ENCODE measurements at regions of chr17 and their contacts with region 1.

Region 1: DNA sequence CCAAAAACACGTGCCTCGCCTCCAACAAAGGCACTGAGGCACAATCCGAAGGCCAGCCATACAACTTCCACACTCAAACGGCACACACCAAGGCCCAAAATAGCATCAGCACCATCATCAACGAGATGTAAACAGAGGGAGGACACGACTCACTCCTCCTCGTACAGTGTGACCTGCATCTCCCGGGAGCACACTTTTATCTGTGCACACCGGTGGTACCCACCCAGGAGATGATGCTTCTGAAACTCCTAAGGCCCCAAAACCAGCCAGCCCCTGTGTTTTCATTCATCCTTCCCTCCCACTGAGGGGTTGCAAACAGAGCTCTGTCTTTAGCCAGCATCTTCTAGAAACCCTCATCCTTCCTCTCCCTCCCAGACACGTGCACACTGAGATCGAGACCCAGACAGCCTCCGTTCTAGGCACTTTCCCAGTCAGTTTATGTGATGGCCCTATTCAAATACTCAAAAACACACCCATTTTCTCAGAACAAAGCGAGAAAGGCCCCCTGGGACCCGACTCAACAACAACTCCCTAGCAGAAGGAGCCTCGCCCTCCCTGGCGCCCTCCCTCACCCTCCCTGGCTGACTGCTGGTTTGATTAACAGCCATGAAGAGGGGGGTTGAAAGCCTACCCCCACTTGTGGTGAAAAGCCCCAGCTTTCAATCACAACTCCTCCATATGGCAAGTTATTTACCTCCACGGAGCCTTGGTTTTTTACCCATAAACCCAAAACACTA is 76.3 kb downstream of the GAS7 start:
- DNase-seq: no peak
- H3K4me3 ChIP-seq: no peak overlapping the region
- H3K27ac ChIP-seq: no peak overlapping the region
- H3K4me1 ChIP-seq: peaks cover 40% of the 10 kb centered on the region
- H3K27me3 ChIP-seq: no peaks in the 10 kb centered on the region
- CTCF ChIP-seq: no peak

Region 2: DNA sequence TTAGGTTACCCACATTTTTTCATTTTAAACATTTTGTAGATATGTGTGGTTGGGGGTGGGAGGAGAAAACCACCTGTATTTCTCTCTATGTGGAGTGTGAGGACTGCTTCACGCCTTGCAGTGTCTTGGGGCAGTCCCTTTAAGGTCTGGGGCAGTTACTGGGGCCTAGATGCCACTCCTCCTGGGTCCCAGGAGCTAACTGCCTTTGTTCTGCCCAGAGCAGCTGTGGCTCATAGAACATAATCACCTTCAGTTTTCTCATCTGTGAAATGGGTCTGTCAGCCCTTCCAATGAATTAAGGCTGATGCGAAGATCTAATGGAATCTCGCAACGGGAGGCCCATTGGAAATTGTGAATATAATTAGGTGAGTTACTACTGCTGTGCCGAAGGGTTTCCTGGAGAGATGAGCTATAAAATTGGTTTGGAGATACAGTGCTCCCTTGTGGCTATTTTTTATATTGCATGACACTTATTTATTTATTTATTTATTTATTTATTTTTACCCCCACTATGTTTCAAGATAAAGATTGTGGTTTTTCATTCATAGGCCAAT is 353.7 kb before region 1 on chr17:
- CTCF ChIA-PET with region 1: no interaction called
- POLR2A ChIA-PET with region 1: no interaction called
- intact Hi-C with region 1: no loop called
- DNase-seq: peak; percentile 72
- H3K4me3 ChIP-seq: no peak overlapping the region
- H3K27ac ChIP-seq: no peak overlapping the region
- H3K4me1 ChIP-seq: no peaks in the 10 kb centered on the region
- H3K27me3 ChIP-seq: peaks cover 19% of the 10 kb centered on the region
- CTCF ChIP-seq: peak; percentile 60

Region 3: GRCh38 chr17:10069301-10069700 is 52.8 kb before region 1 on chr17:
- CTCF ChIA-PET with region 1: no interaction called
- POLR2A ChIA-PET with region 1: no interaction called
- intact Hi-C with region 1: no loop called
- DNase-seq: no peak
- H3K4me3 ChIP-seq: no peak overlapping the region
- H3K27ac ChIP-seq: no peak overlapping the region
- H3K4me1 ChIP-seq: no peaks in the 10 kb centered on the region
- H3K27me3 ChIP-seq: no peaks in the 10 kb centered on the region
- CTCF ChIP-seq: no peak

Region 4: DNA sequence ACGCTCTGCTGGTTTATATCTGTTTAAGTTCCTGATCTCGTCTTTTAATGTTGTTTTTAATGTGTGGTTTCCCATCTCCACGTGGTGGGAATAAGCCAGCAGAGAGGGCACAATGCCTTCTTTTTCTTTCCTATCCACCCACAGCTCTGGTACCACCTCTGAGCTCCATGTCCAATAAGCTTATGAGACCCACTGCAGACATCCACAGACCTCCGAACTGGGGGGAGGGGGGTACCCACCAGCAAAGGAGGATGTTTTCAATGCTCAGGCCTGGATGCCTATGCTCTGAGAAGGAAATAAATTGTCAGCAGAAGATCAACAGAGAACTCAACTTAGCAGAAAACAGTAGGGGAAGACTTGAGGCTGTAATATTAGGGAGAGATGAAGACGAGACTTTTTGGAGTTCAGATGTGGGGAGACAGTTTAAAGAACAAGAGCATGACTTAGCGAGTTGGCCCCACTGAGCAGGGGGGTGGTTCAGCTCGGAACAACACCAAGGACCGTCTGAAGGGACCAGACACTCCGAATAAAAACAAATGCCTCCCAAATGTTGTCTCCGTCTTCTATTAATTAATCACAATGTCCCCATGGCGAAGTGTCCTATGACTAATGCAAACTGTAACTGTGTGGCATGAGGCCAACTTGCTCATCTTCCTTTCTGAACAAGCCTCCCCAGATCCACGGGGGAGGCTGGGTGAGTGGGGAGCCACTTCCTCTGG is 13.6 kb after region 1 on chr17:
- CTCF ChIA-PET with region 1: interaction called, 16 read pairs
- POLR2A ChIA-PET with region 1: no interaction called
- intact Hi-C with region 1: no loop called
- DNase-seq: peak; percentile 69
- H3K4me3 ChIP-seq: no peak overlapping the region
- H3K27ac ChIP-seq: no peak overlapping the region
- H3K4me1 ChIP-seq: peaks cover 14% of the 10 kb centered on the region
- H3K27me3 ChIP-seq: no peaks in the 10 kb centered on the region
- CTCF ChIP-seq: no peak

Measured in A673 (cell line).